ENCODE measurements at regions of chr5 and their contacts with region 1.

Region 1: DNA sequence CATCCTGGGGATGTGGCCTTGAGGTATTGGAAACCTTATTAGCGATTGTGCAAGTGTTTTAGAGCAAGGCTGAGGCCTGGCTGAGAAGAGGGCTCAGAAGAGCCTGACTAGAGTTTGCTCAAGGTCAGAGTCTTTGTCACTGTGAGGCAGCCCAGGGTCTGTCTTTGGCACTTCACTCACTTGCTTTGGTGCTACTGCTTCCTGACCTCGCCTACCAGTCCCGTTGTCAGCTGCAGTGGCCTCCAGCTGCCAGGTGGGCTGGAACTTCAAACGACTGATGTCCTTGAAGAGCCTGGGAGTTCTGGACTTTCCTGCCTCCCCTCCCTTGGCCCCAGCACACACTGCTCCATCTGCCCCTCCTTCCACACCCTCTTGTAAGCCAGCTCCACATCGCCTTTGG is 228.0 kb downstream of the SNX18 start:
- H3K4me3 Mint-ChIP-seq: no peak overlapping the region
- H3K27ac Mint-ChIP-seq: no peak overlapping the region
- H3K4me1 Mint-ChIP-seq: peaks cover 40% of the 10 kb centered on the region
- H3K27me3 Mint-ChIP-seq: peaks cover 3% of the 10 kb centered on the region

Region 2: GRCh38 chr5:54007827-54008777 is 737.5 kb before region 1 on chr5:
- intact Hi-C with region 1: no loop called
- H3K4me3 Mint-ChIP-seq: no peak overlapping the region
- H3K27ac Mint-ChIP-seq: no peak overlapping the region
- H3K4me1 Mint-ChIP-seq: no peaks in the 10 kb centered on the region
- H3K27me3 Mint-ChIP-seq: peaks cover 2% of the 10 kb centered on the region

Region 3: GRCh38 chr5:54517174-54518092 is 228.2 kb before region 1 on chr5 and contains the start of gene SNX18:
- intact Hi-C with region 1: no loop called
- H3K4me3 Mint-ChIP-seq: peak within 1 kb of the TSS; percentile 86
- H3K27ac Mint-ChIP-seq: peak within 1 kb of the TSS; percentile 85
- H3K4me1 Mint-ChIP-seq: peaks cover 22% of the 10 kb centered on the region
- H3K27me3 Mint-ChIP-seq: peaks cover 10% of the 10 kb centered on the region

Region 4: GRCh38 chr5:54558362-54558761 is 187.2 kb before region 1 on chr5:
- intact Hi-C with region 1: no loop called
- H3K4me3 Mint-ChIP-seq: no peak overlapping the region
- H3K27ac Mint-ChIP-seq: no peak overlapping the region
- H3K4me1 Mint-ChIP-seq: peaks cover 12% of the 10 kb centered on the region
- H3K27me3 Mint-ChIP-seq: no peaks in the 10 kb centered on the region

Region 5: GRCh38 chr5:54785729-54786591 is 40.4 kb after region 1 on chr5:
- intact Hi-C with region 1: loop called (anchors 5 kb)
- H3K4me3 Mint-ChIP-seq: no peak overlapping the region
- H3K27ac Mint-ChIP-seq: peak overlapping the region; percentile 76
- H3K4me1 Mint-ChIP-seq: peaks cover 40% of the 10 kb centered on the region
- H3K27me3 Mint-ChIP-seq: no peaks in the 10 kb centered on the region